OCI-LY7 (cell line): ENCODE measurements at regions of chr4 and their contacts with region 1.

Region 1: GRCh38 chr4:86386817-86387415 is 27.1 kb upstream of the MAPK10 start:
- DNase-seq: no peak
- H3K4me3 ChIP-seq: no peak overlapping the region
- H3K27ac ChIP-seq: no peak overlapping the region
- H3K4me1 ChIP-seq: no peaks in the 10 kb centered on the region
- CTCF ChIP-seq: no peak

Region 2: DNA sequence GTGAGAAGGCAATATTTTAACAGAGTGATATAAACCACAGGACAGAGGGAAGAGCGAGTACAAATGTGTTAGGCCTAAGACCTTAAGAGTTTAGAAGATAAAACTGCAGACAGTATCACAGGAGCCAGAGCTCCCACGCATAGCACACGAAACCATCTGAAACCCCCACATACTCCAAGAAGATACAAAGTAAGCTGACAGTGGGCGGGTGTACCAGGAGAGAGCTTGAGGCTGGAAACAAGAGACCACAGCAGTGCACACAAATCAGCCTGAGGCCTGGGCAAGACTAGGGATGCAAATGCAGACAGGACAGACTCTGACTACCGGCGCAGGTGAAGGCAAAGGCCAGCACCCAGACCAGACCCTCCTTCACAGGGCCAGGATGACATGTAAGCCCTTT is 966.1 kb before region 1 on chr4:
- CTCF ChIA-PET with region 1: no interaction called
- POLR2A ChIA-PET with region 1: no interaction called
- intact Hi-C with region 1: no loop called
- DNase-seq: no peak
- H3K4me3 ChIP-seq: no peak overlapping the region
- H3K27ac ChIP-seq: no peak overlapping the region
- H3K4me1 ChIP-seq: no peaks in the 10 kb centered on the region
- CTCF ChIP-seq: no peak

Region 3: GRCh38 chr4:86367577-86367976 is 19.3 kb before region 1 on chr4:
- CTCF ChIA-PET with region 1: no interaction called
- POLR2A ChIA-PET with region 1: interaction called, 13 read pairs
- intact Hi-C with region 1: no loop called
- DNase-seq: no peak
- H3K4me3 ChIP-seq: no peak overlapping the region
- H3K27ac ChIP-seq: no peak overlapping the region
- H3K4me1 ChIP-seq: no peaks in the 10 kb centered on the region
- CTCF ChIP-seq: no peak

Region 4: GRCh38 chr4:86416081-86416480 is 29.2 kb after region 1 on chr4:
- CTCF ChIA-PET with region 1: no interaction called
- POLR2A ChIA-PET with region 1: no interaction called
- intact Hi-C with region 1: no loop called
- DNase-seq: no peak
- H3K4me3 ChIP-seq: no peak overlapping the region
- H3K27ac ChIP-seq: no peak overlapping the region
- H3K4me1 ChIP-seq: no peaks in the 10 kb centered on the region
- CTCF ChIP-seq: no peak